B cell (primary cell): ENCODE measurements at regions of chr13 and their contacts with region 1.

Region 1: GRCh38 chr13:74287724-74288169 is 153.5 kb upstream of the KLF12 start:
- DNase-seq: peak; percentile 96
- ATAC-seq: peak; percentile 53
- H3K4me3 ChIP-seq: peak overlapping the region; percentile 43 to 77 (median 58)
- H3K4me3 Mint-ChIP-seq: peak overlapping the region; percentile 88
- H3K27ac ChIP-seq: peak overlapping the region; percentile 92 to 93
- H3K27ac Mint-ChIP-seq: peak overlapping the region; percentile 92
- H3K4me1 ChIP-seq: peaks cover 39 to 44% of the 10 kb centered on the region in 2 donors
- H3K4me1 Mint-ChIP-seq: peaks cover 51% of the 10 kb centered on the region
- H3K27me3 ChIP-seq: no peaks in the 10 kb centered on the region
- H3K27me3 Mint-ChIP-seq: no peaks in the 10 kb centered on the region
- CTCF ChIP-seq: no peak

Region 2: GRCh38 chr13:73765651-73766384 is 521.9 kb before region 1 on chr13:
- CTCF ChIA-PET with region 1: interaction called, 23 read pairs
- POLR2A ChIA-PET with region 1: no interaction called
- intact Hi-C with region 1: loop called (anchors 5 kb)
- DNase-seq: peak; percentile 65
- ATAC-seq: peak; percentile 79
- H3K4me3 ChIP-seq: peak overlapping the region in 4 of 5 experiments; percentile 0 to 43 (median 16)
- H3K4me3 Mint-ChIP-seq: peak overlapping the region; percentile 78
- H3K27ac ChIP-seq: peak overlapping the region; percentile 83 to 92
- H3K27ac Mint-ChIP-seq: peak overlapping the region; percentile 94
- H3K4me1 ChIP-seq: peaks cover 51 to 60% of the 10 kb centered on the region in 2 donors
- H3K4me1 Mint-ChIP-seq: peaks cover 71% of the 10 kb centered on the region
- H3K27me3 ChIP-seq: no peaks in the 10 kb centered on the region
- H3K27me3 Mint-ChIP-seq: no peaks in the 10 kb centered on the region
- CTCF ChIP-seq: no peak

Region 3: GRCh38 chr13:73849292-73849691 is 438.5 kb before region 1 on chr13:
- CTCF ChIA-PET with region 1: interaction called, 69 read pairs
- POLR2A ChIA-PET with region 1: no interaction called
- intact Hi-C with region 1: loop called (anchors 1 kb)
- DNase-seq: peak; percentile 47
- ATAC-seq: peak; percentile 56
- H3K4me3 ChIP-seq: no peak overlapping the region
- H3K4me3 Mint-ChIP-seq: no peak overlapping the region
- H3K27ac ChIP-seq: no peak overlapping the region
- H3K27ac Mint-ChIP-seq: no peak overlapping the region
- H3K4me1 ChIP-seq: peaks cover 5 to 7% of the 10 kb centered on the region in 2 donors
- H3K4me1 Mint-ChIP-seq: peaks cover 23% of the 10 kb centered on the region
- H3K27me3 ChIP-seq: no peaks in the 10 kb centered on the region
- H3K27me3 Mint-ChIP-seq: no peaks in the 10 kb centered on the region
- CTCF ChIP-seq: peak; percentile 42

Region 4: DNA sequence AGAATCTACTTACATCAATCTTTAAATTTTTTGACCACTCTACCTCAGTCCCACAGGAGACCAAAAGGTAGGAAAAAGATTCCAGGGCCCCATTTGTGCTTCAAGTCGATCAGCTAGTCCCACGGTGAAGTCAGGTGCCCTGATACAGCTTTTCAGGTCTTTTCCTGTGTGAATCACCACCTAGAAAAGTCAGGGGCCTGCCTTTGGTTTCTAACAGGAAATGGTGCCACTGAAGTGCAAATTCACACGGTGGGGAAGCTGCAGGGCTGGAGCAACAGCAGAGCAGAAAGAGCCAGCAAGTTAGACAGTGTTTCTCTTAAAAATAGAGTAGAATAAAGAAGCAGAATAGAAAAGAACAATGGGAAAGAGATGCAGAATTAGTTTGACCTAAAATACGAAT is 261.0 kb before region 1 on chr13:
- CTCF ChIA-PET with region 1: interaction called, 8 read pairs
- POLR2A ChIA-PET with region 1: no interaction called
- intact Hi-C with region 1: loop called (anchors 10 kb)
- DNase-seq: peak; percentile 75
- ATAC-seq: peak; percentile 93
- H3K4me3 ChIP-seq: peak overlapping the region; percentile 7 to 52 (median 18)
- H3K4me3 Mint-ChIP-seq: peak overlapping the region; percentile 79
- H3K27ac ChIP-seq: peak overlapping the region; percentile 71 to 85
- H3K27ac Mint-ChIP-seq: peak overlapping the region; percentile 89
- H3K4me1 ChIP-seq: peaks cover 20 to 43% of the 10 kb centered on the region in 2 donors
- H3K4me1 Mint-ChIP-seq: peaks cover 72% of the 10 kb centered on the region
- H3K27me3 ChIP-seq: no peaks in the 10 kb centered on the region
- H3K27me3 Mint-ChIP-seq: no peaks in the 10 kb centered on the region
- CTCF ChIP-seq: no peak

Region 5: DNA sequence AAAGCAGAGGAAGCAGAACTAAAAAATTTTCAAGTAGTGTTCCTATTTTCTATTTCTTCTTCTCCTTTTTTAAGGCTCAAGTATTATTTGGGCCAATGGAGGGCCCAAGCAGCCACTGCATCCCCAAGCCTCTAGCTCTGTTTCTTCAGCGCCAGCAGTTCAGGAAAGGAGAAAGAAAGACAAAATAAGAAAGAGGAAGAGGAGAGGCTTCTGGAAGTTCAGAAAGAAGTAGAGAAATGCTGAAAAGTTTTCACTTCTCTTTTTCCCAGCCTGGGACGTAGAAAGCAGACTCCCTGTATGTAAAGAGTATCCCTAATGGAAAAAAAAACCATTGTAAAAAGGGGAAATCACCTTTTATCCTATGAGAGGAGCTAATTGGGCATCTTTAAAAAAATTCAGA is 12.0 kb after region 1 on chr13:
- CTCF ChIA-PET with region 1: interaction called, 11 read pairs
- POLR2A ChIA-PET with region 1: no interaction called
- intact Hi-C with region 1: no loop called
- DNase-seq: peak; percentile 15
- ATAC-seq: no peak
- H3K4me3 ChIP-seq: no peak overlapping the region
- H3K4me3 Mint-ChIP-seq: no peak overlapping the region
- H3K27ac ChIP-seq: no peak overlapping the region
- H3K27ac Mint-ChIP-seq: no peak overlapping the region
- H3K4me1 ChIP-seq: peaks cover 5 to 8% of the 10 kb centered on the region in 2 donors
- H3K4me1 Mint-ChIP-seq: peaks cover 14% of the 10 kb centered on the region
- H3K27me3 ChIP-seq: no peaks in the 10 kb centered on the region
- H3K27me3 Mint-ChIP-seq: no peaks in the 10 kb centered on the region
- CTCF ChIP-seq: no peak